SK-N-SH (cell line): ENCODE measurements at regions of chr12 and their contacts with region 1.

Region 1: DNA sequence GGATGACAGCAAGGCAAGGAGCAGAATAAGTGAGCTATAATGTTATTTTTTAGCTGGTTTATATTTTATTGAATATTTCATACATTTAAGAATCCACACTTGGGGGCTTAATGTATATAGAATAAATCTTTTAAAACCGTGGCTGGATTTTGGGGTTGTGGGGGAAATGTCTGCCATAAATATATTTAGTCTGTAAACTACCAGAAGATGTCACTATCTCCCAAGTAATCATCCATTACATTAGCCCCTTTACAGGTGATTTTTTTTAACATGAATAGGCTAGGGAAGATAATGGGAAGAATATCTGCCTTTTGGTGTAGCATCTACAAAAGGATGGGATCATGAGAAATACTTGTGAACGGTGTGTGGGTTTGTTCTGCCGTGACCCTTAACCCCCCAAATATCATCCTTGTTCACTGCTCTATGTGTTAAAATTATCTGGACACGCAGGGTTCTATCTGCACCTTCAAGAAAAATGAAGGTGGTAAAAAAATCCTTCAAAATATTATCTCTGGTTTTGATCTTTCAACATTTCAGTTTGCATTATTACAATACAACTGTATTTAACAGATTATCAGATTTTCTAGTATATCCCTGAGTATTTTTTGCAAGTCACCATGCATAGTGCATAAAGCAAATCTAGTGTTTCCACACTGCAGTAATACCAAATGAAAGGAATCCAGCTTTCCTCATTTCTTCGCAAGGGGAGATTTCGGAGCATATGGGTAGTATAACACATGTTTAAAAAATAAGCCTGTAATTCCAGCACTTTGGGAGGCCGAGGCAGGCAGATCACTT is 8.0 kb upstream of the SLC17A8 start:
- DNase-seq: peak; percentile 55
- H3K4me3 ChIP-seq: no peak overlapping the region
- H3K27ac ChIP-seq: no peak overlapping the region
- H3K4me1 ChIP-seq: no peaks in the 10 kb centered on the region
- H3K27me3 ChIP-seq: no peaks in the 10 kb centered on the region
- CTCF ChIP-seq: peak; percentile 69
- EP300 ChIP-seq: no peak
- RAD21 ChIP-seq: peak; percentile 82

Region 2: DNA sequence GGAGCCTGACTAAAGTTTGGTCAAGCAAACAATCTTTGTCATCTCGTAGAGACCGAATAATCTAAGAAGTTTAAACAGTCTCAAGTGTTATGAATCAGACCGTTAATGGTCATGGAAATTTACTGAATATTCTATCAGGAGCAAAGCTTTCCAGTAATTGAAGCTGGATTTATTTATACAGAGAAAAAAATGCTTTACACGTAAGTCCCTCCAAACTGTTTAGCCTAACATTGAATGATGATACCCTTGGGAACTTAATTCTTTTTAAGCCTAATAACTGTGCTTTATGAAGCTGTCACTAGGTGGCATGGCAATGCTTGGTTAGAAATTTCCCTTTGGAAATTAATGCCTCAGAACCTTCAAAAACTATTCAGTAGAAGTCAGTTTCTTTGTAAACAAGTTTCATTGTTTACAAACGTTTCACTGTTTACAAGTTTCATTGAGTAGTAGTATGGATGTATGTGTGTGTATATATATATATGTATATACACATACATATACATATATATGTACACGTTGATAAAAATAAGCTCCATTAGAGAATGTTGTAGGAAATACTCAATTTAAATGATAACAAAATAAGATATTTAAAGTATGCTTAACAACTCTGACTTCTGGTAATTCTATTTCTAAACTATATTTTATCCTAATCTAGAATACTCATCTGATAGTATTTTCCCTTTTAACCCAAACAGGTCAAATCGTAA is 114.1 kb before region 1 on chr12:
- CTCF ChIA-PET with region 1: interaction called, 11 read pairs
- POLR2A ChIA-PET with region 1: no interaction called
- DNase-seq: peak; percentile 38
- H3K4me3 ChIP-seq: no peak overlapping the region; a peak in 1 of 4 replicates
- H3K27ac ChIP-seq: no peak overlapping the region
- H3K4me1 ChIP-seq: no peaks in the 10 kb centered on the region
- H3K27me3 ChIP-seq: no peaks in the 10 kb centered on the region
- CTCF ChIP-seq: peak; percentile 83
- EP300 ChIP-seq: no peak
- RAD21 ChIP-seq: peak; percentile 89

Region 3: DNA sequence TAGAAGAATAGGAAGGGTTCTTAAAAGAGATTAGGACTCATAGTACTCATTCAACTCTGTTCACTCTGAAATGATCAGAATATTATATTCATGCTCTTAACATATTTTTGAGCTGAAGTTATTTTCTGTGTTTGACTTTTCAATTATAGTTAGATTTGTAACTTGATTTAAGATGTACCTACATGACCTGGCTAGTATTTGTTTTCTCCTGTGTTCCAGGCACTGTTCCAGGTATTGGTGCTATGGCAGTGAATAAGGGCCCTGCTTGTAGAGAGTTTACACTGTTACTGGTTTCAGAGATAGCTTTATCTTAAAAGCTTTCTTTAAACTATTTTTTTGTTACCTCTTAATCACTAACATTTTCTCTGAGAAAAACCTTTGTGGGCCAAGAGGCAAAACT is 11.1 kb before region 1 on chr12:
- CTCF ChIA-PET with region 1: interaction called, 10 read pairs
- POLR2A ChIA-PET with region 1: no interaction called
- DNase-seq: no peak
- H3K4me3 ChIP-seq: no peak overlapping the region
- H3K27ac ChIP-seq: no peak overlapping the region
- H3K4me1 ChIP-seq: no peaks in the 10 kb centered on the region
- H3K27me3 ChIP-seq: no peaks in the 10 kb centered on the region
- CTCF ChIP-seq: no peak
- EP300 ChIP-seq: no peak
- RAD21 ChIP-seq: no peak

Region 4: GRCh38 chr12:100404769-100405407 is 56.0 kb after region 1 on chr12:
- CTCF ChIA-PET with region 1: interaction called, 14 read pairs
- POLR2A ChIA-PET with region 1: no interaction called
- DNase-seq: peak; percentile 38
- H3K4me3 ChIP-seq: peak overlapping the region in 1 of 2 experiments; percentile 27; a peak in 1 of 4 replicates
- H3K27ac ChIP-seq: no peak overlapping the region
- H3K4me1 ChIP-seq: peaks cover 0 to 6% of the 10 kb centered on the region in 2 experiments; a peak in 1 of 4 replicates
- H3K27me3 ChIP-seq: no peaks in the 10 kb centered on the region
- CTCF ChIP-seq: peak; percentile 59
- EP300 ChIP-seq: no peak
- RAD21 ChIP-seq: peak; percentile 58

Region 5: GRCh38 chr12:100724071-100724470 is 375.2 kb after region 1 on chr12:
- CTCF ChIA-PET with region 1: no interaction called
- POLR2A ChIA-PET with region 1: no interaction called
- DNase-seq: no peak
- H3K4me3 ChIP-seq: no peak overlapping the region
- H3K27ac ChIP-seq: no peak overlapping the region
- H3K4me1 ChIP-seq: no peaks in the 10 kb centered on the region
- H3K27me3 ChIP-seq: no peaks in the 10 kb centered on the region
- CTCF ChIP-seq: no peak
- EP300 ChIP-seq: no peak
- RAD21 ChIP-seq: no peak